HCT116 (cell line): ENCODE measurements at regions of chrX and their contacts with region 1.

Region 1: DNA sequence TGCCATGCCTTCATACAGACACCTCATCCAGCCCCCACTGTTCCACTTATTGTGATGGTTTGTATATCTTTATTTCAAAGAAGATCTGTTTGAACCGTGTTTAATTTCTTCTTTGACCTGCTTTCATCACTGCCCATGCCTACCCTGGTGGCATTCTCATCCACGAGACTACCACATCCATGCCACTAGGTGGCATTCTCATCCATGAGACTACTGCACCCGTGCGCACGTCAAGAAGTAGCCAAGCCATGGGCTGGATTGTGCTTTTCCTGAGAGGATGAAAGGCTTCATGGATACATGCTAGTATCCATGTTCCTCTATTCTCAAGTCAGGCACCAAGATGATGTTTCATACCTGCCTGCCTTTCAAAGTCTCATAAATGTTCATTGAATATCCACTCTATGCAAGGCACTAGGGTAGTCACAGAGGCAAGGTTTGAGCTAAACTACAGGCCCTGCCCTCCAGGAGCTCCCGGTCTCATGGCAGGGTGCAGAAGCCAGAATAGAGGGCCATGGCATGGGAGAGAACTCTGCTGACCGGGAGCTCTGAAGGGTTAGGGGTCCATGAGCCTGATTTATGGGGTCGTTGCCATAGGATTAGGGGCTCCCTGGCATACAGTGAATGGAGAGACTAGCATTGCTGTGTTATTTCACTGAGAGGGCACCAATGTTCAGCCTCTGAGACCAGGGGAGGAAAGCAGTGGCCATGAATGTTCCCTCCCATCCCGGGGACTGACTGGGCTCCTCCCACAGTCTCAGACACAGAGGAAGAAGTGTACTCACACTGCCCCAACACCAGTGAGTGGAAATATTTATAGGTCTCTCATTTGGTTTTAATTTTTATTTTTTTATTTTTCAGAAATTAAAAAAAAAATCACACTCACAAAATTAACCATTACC is 24.8 kb upstream of the EOLA2 start:
- DNase-seq: peak; percentile 45
- ATAC-seq: peak; percentile 100
- H3K4me3 ChIP-seq: no peak overlapping the region
- H3K27ac ChIP-seq: no peak overlapping the region
- H3K4me1 ChIP-seq: peaks cover 0 to 2% of the 10 kb centered on the region in 2 experiments; a peak in 1 of 4 replicates
- H3K27me3 ChIP-seq: no peaks in the 10 kb centered on the region
- CTCF ChIP-seq: peak; percentile 82 to 93 (median 82); a peak in 5 of 6 replicates
- POLR2A ChIP-seq: no peak
- RAD21 ChIP-seq: peak; percentile 95

Region 2: GRCh38 chrX:149306445-149306844 is 656.7 kb before region 1 on chrX:
- CTCF ChIA-PET with region 1: no interaction called
- POLR2A ChIA-PET with region 1: no interaction called
- RAD21 ChIA-PET with region 1: no interaction called
- intact Hi-C with region 1: no loop called
- DNase-seq: no peak
- ATAC-seq: no peak
- H3K4me3 ChIP-seq: no peak overlapping the region
- H3K27ac ChIP-seq: no peak overlapping the region
- H3K4me1 ChIP-seq: no peaks in the 10 kb centered on the region
- H3K27me3 ChIP-seq: no peaks in the 10 kb centered on the region
- CTCF ChIP-seq: no peak
- POLR2A ChIP-seq: no peak
- RAD21 ChIP-seq: peak; percentile 13; the same call in 1 of the 2 replicates

Region 3: GRCh38 chrX:149433051-149433450 is 530.1 kb before region 1 on chrX:
- CTCF ChIA-PET with region 1: no interaction called
- POLR2A ChIA-PET with region 1: no interaction called
- RAD21 ChIA-PET with region 1: no interaction called
- intact Hi-C with region 1: no loop called
- DNase-seq: no peak
- ATAC-seq: no peak
- H3K4me3 ChIP-seq: no peak overlapping the region
- H3K27ac ChIP-seq: no peak overlapping the region
- H3K4me1 ChIP-seq: no peaks in the 10 kb centered on the region
- H3K27me3 ChIP-seq: no peaks in the 10 kb centered on the region
- CTCF ChIP-seq: 0 out of 6 replicates have a peak, but pooled peaks of 2 of the 3 experiments have one; percentile 7 to 11
- POLR2A ChIP-seq: no peak
- RAD21 ChIP-seq: no peak

Region 4: GRCh38 chrX:149493567-149494559 is 469.2 kb before region 1 on chrX:
- CTCF ChIA-PET with region 1: no interaction called
- POLR2A ChIA-PET with region 1: no interaction called
- RAD21 ChIA-PET with region 1: no interaction called
- intact Hi-C with region 1: loop called (anchors 5 kb)
- DNase-seq: no peak
- ATAC-seq: peak; percentile 60
- H3K4me3 ChIP-seq: no peak overlapping the region
- H3K27ac ChIP-seq: no peak overlapping the region
- H3K4me1 ChIP-seq: peaks cover 10 to 30% of the 10 kb centered on the region in 2 experiments
- H3K27me3 ChIP-seq: no peaks in the 10 kb centered on the region
- CTCF ChIP-seq: 0 out of 6 replicates have a peak, but pooled peaks of 1 of the 3 experiments have one; percentile 3
- POLR2A ChIP-seq: no peak
- RAD21 ChIP-seq: no peak; the same call in 1 of the 2 replicates

Region 5: DNA sequence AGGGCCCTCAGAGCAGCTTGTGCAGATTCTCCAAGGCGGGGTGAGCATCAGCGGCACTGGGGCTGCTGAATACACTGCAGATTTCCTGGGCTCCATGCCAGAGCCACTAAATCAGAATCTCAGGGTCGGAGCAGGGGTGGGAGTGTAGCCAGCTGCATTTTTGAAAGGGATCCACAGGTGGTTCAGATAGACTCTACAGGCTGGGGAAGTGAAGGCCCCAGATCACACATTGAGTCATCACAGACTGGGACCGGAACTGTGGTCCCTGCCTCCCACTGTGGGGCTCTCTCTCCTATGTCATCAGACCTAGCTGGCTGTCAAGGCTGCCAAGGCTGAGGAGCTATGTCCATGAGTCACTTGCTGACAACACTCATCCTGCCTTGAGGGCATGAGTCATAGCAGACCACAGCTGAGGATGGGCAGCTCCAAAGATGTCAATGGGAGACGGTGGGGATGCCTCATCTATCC is 237.7 kb after region 1 on chrX:
- CTCF ChIA-PET with region 1: no interaction called
- POLR2A ChIA-PET with region 1: no interaction called
- RAD21 ChIA-PET with region 1: no interaction called
- intact Hi-C with region 1: loop called (anchors 10 kb)
- DNase-seq: peak; percentile 80
- ATAC-seq: peak; percentile 90
- H3K4me3 ChIP-seq: no peak overlapping the region
- H3K27ac ChIP-seq: no peak overlapping the region
- H3K4me1 ChIP-seq: peaks cover 7 to 17% of the 10 kb centered on the region in 2 experiments
- H3K27me3 ChIP-seq: no peaks in the 10 kb centered on the region
- CTCF ChIP-seq: no peak
- POLR2A ChIP-seq: no peak
- RAD21 ChIP-seq: peak; percentile 28

Region 6: GRCh38 chrX:150486011-150486410 is 522.9 kb after region 1 on chrX:
- CTCF ChIA-PET with region 1: interaction called, 3 read pairs
- POLR2A ChIA-PET with region 1: no interaction called
- RAD21 ChIA-PET with region 1: no interaction called
- intact Hi-C with region 1: loop called (anchors 2 kb)
- DNase-seq: peak; percentile 24
- ATAC-seq: peak; percentile 86
- H3K4me3 ChIP-seq: no peak overlapping the region
- H3K27ac ChIP-seq: no peak overlapping the region
- H3K4me1 ChIP-seq: peaks cover 3 to 16% of the 10 kb centered on the region in 2 experiments; a peak in 3 of 4 replicates
- H3K27me3 ChIP-seq: no peaks in the 10 kb centered on the region
- CTCF ChIP-seq: peak; percentile 55 to 77 (median 61)
- POLR2A ChIP-seq: no peak
- RAD21 ChIP-seq: peak; percentile 59

Region 7: DNA sequence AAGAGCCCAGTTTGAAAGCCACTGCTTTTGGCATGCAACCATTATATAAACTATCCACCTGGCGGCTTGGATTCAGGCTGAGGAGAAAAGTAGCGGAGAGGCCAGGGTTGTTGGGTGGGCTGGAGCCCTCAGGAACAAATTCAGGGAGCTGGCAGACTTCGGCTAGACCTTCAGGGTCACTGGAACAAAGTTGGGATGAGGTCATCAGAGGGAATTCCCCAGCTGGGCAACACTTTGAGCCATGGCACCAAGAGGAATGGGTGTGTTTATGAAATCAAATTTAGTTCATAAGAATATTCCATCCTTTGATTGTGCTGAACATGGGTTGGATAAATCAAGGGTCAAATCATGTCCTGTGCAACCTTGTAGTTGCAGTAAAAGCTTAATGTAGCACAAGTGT is 752.1 kb after region 1 on chrX:
- CTCF ChIA-PET with region 1: no interaction called
- POLR2A ChIA-PET with region 1: no interaction called
- RAD21 ChIA-PET with region 1: no interaction called
- intact Hi-C with region 1: loop called (anchors 5 kb)
- DNase-seq: no peak
- ATAC-seq: no peak
- H3K4me3 ChIP-seq: no peak overlapping the region
- H3K27ac ChIP-seq: no peak overlapping the region
- H3K4me1 ChIP-seq: no peaks in the 10 kb centered on the region
- H3K27me3 ChIP-seq: no peaks in the 10 kb centered on the region
- CTCF ChIP-seq: no peak
- POLR2A ChIP-seq: no peak
- RAD21 ChIP-seq: no peak